ENCODE measurements at regions of chr1 and their contacts with region 1.

Region 1: GRCh38 chr1:198275597-198275996 is 118.8 kb downstream of the NEK7 start:
- DNase-seq: no peak
- ATAC-seq: no peak
- H3K4me3 ChIP-seq: no peak overlapping the region
- H3K27ac ChIP-seq: no peak overlapping the region
- H3K4me1 ChIP-seq: no peaks in the 10 kb centered on the region
- H3K27me3 ChIP-seq: no peaks in the 10 kb centered on the region
- CTCF ChIP-seq: peak in 1 of 3 experiments; percentile 18; a peak in 1 of 6 replicates
- EP300 ChIP-seq: no peak
- POLR2A ChIP-seq: no peak
- RAD21 ChIP-seq: peak; percentile 48

Region 2: DNA sequence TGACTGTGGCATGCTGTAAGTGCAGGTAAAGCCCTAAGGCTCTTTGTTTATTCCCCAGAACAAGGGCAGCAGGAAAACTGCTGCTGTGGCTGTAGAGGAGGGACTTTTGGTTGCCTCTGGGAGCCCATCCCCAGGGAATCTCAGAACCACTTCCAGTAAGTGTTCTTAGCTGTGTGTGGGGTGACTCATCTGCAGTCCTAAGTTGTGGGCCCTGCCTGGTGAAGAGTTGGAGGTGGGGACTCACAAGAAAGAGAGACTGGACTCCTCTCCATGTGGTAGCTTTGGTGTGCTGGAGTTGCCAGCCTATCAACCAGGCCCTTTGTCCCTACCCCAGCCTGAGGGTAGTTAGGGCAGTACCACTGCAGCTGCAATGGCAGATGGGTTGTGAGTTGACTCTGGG is 476.3 kb before region 1 on chr1:
- CTCF ChIA-PET with region 1: no interaction called
- POLR2A ChIA-PET with region 1: no interaction called
- RAD21 ChIA-PET with region 1: no interaction called
- SMC1A ChIA-PET with region 1: no interaction called
- in situ Hi-C with region 1: no loop called
- intact Hi-C with region 1: no loop called
- DNase-seq: no peak
- ATAC-seq: no peak
- H3K4me3 ChIP-seq: no peak overlapping the region
- H3K27ac ChIP-seq: no peak overlapping the region
- H3K4me1 ChIP-seq: no peaks in the 10 kb centered on the region
- H3K27me3 ChIP-seq: no peaks in the 10 kb centered on the region
- CTCF ChIP-seq: no peak
- EP300 ChIP-seq: no peak
- POLR2A ChIP-seq: no peak
- RAD21 ChIP-seq: no peak

Region 3: GRCh38 chr1:198088360-198089071 is 187.1 kb before region 1 on chr1:
- CTCF ChIA-PET with region 1: interaction called, 5 read pairs
- POLR2A ChIA-PET with region 1: no interaction called
- RAD21 ChIA-PET with region 1: interaction called, 3 read pairs
- SMC1A ChIA-PET with region 1: no interaction called
- in situ Hi-C with region 1: no loop called
- intact Hi-C with region 1: loop called (anchors 5 kb)
- DNase-seq: no peak
- ATAC-seq: peak; percentile 58
- H3K4me3 ChIP-seq: no peak overlapping the region
- H3K27ac ChIP-seq: no peak overlapping the region
- H3K4me1 ChIP-seq: no peaks in the 10 kb centered on the region
- H3K27me3 ChIP-seq: no peaks in the 10 kb centered on the region; a peak in 1 of 4 replicates
- CTCF ChIP-seq: peak; percentile 43 to 64 (median 48); a peak in 5 of 6 replicates
- EP300 ChIP-seq: no peak
- POLR2A ChIP-seq: no peak
- RAD21 ChIP-seq: peak; percentile 72

Region 4: DNA sequence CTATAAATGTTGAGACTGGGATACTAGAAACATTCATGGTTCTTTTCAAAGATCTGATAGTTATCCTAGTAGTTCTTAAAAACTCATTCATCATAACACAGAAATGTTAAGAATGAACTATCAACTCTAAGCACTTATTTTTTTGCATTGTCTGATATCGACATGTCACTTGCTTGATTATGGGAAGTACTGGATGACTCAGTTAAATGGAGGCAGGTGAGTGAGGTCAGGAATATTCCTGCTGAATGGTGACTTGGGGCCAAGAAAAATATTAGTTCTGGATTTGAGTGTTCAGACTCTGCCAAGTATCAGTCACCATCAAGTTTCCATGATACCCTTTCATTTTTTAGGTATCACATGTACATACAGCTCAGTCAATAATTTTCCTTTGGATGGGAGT is 55.2 kb before region 1 on chr1:
- CTCF ChIA-PET with region 1: no interaction called
- POLR2A ChIA-PET with region 1: no interaction called
- RAD21 ChIA-PET with region 1: no interaction called
- SMC1A ChIA-PET with region 1: no interaction called
- in situ Hi-C with region 1: no loop called
- intact Hi-C with region 1: no loop called
- DNase-seq: no peak
- ATAC-seq: no peak
- H3K4me3 ChIP-seq: no peak overlapping the region
- H3K27ac ChIP-seq: no peak overlapping the region
- H3K4me1 ChIP-seq: no peaks in the 10 kb centered on the region
- H3K27me3 ChIP-seq: no peaks in the 10 kb centered on the region
- CTCF ChIP-seq: no peak
- EP300 ChIP-seq: no peak
- POLR2A ChIP-seq: no peak
- RAD21 ChIP-seq: no peak

Region 5: GRCh38 chr1:198259336-198260074 is 16.1 kb before region 1 on chr1:
- CTCF ChIA-PET with region 1: interaction called, 11 read pairs
- POLR2A ChIA-PET with region 1: interaction called, 3 read pairs
- RAD21 ChIA-PET with region 1: interaction called, 3 read pairs
- SMC1A ChIA-PET with region 1: interaction called, 10 read pairs
- in situ Hi-C with region 1: no loop called
- intact Hi-C with region 1: no loop called
- DNase-seq: no peak
- ATAC-seq: no peak
- H3K4me3 ChIP-seq: no peak overlapping the region
- H3K27ac ChIP-seq: no peak overlapping the region
- H3K4me1 ChIP-seq: peaks cover 5% of the 10 kb centered on the region
- H3K27me3 ChIP-seq: no peaks in the 10 kb centered on the region
- CTCF ChIP-seq: no peak
- EP300 ChIP-seq: no peak
- POLR2A ChIP-seq: no peak
- RAD21 ChIP-seq: no peak

Region 6: GRCh38 chr1:198265073-198265661 is 10.4 kb before region 1 on chr1:
- CTCF ChIA-PET with region 1: interaction called, 11 read pairs
- POLR2A ChIA-PET with region 1: interaction called, 3 read pairs
- RAD21 ChIA-PET with region 1: interaction called, 3 read pairs
- SMC1A ChIA-PET with region 1: interaction called, 10 read pairs
- in situ Hi-C with region 1: no loop called
- intact Hi-C with region 1: no loop called
- DNase-seq: no peak
- ATAC-seq: no peak
- H3K4me3 ChIP-seq: no peak overlapping the region
- H3K27ac ChIP-seq: no peak overlapping the region
- H3K4me1 ChIP-seq: no peaks in the 10 kb centered on the region
- H3K27me3 ChIP-seq: no peaks in the 10 kb centered on the region
- CTCF ChIP-seq: no peak
- EP300 ChIP-seq: no peak
- POLR2A ChIP-seq: no peak
- RAD21 ChIP-seq: no peak